ENCODE measurements at regions of chr6 and their contacts with region 1.

Region 1: DNA sequence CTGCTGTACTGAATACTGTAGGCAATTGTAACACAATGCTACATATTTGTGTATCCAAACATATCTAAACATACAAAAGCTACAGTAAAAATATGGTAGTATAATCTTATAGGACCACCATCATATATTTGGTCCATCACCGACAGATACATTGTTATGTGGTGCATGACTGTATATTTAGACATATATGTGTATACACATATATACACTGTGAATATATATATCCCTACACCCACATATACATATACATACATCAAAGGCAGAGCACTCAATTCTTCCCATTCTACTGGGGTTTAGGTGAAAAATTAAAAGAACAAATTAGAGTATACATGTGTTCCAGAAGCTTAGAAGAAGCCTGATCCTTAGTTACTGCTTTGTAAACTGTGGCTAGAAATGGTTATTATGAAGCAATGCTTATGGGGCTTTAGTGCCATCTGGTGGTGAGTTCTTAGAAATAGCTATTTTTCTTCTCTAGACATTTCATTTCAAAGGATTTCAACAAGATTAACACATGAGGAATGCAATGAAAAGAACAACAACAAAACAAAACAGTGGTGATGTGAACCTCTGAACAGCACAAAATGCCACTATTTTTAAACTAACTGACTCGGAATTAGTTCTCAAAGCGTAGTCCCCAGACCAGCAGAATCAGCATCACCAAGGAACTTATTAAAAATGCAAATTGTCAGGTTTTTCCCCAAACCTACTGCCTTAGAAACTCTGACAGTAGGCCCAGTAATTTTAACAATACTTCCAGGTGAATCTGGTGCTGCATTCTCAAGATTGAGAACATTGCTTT is 38.0 kb downstream of the PKHD1 start:
- DNase-seq: peak in 2 of 35 experiments; percentile 3 to 48
- ATAC-seq: peak in 1 of 4 experiments; percentile 32
- H3K4me3 ChIP-seq: no peak overlapping the region
- H3K4me3 Mint-ChIP-seq: no peak overlapping the region
- H3K27ac ChIP-seq: no peak overlapping the region
- H3K27ac Mint-ChIP-seq: no peak overlapping the region
- H3K4me1 ChIP-seq: no peaks in the 10 kb centered on the region
- H3K4me1 Mint-ChIP-seq: no peaks in the 10 kb centered on the region
- H3K27me3 ChIP-seq: peaks cover 0 to 13% of the 10 kb centered on the region in 2 experiments
- H3K27me3 Mint-ChIP-seq: peaks cover 10 to 45% of the 10 kb centered on the region in 2 donors

Region 2: GRCh38 chr6:52000064-52000463 is 49.4 kb before region 1 on chr6:
- CTCF ChIA-PET with region 1: no interaction called
- POLR2A ChIA-PET with region 1: no interaction called
- DNase-seq: no peak
- ATAC-seq: no peak
- H3K4me3 ChIP-seq: no peak overlapping the region
- H3K4me3 Mint-ChIP-seq: no peak overlapping the region
- H3K27ac ChIP-seq: no peak overlapping the region
- H3K27ac Mint-ChIP-seq: no peak overlapping the region
- H3K4me1 ChIP-seq: no peaks in the 10 kb centered on the region
- H3K4me1 Mint-ChIP-seq: no peaks in the 10 kb centered on the region
- H3K27me3 ChIP-seq: no peaks in the 10 kb centered on the region
- H3K27me3 Mint-ChIP-seq: peaks cover 10 to 17% of the 10 kb centered on the region in 2 donors

Region 3: DNA sequence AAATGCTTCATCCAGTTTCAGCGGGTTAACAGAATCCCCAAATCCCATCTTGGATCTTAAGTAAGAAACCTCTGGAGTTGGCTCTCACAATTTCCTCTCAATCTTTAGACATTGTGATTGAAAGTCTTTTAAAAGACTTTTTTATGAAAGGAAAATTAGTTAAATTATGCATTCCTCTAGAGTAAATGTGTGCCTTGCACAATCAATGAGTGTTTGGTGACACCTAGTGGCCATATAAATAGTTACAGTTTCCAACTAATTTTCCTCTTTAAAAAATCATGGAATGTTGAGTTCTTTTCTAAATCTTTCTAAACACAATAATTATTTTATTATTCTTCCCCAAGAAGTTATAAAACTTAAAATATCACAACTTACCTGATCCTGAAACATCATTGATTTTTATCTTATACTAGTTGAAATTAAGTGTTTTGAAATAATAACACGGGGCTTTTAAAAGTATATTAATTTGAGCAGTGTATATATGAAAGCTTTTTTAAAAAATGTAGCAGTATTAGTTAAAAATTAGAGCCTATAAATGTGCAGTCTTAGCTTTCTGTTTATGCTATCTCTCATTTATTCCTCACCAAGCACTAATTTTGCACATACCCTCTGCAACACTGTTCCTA is 28.4 kb before region 1 on chr6:
- CTCF ChIA-PET with region 1: interaction called, 3 to 10 read pairs
- POLR2A ChIA-PET with region 1: no interaction called
- DNase-seq: peak in 1 of 35 experiments; percentile 40
- ATAC-seq: no peak
- H3K4me3 ChIP-seq: no peak overlapping the region
- H3K4me3 Mint-ChIP-seq: no peak overlapping the region
- H3K27ac ChIP-seq: no peak overlapping the region
- H3K27ac Mint-ChIP-seq: no peak overlapping the region
- H3K4me1 ChIP-seq: no peaks in the 10 kb centered on the region
- H3K4me1 Mint-ChIP-seq: no peaks in the 10 kb centered on the region
- H3K27me3 ChIP-seq: peaks cover 0 to 16% of the 10 kb centered on the region in 2 experiments
- H3K27me3 Mint-ChIP-seq: peaks cover 17 to 20% of the 10 kb centered on the region in 2 donors

Region 4: DNA sequence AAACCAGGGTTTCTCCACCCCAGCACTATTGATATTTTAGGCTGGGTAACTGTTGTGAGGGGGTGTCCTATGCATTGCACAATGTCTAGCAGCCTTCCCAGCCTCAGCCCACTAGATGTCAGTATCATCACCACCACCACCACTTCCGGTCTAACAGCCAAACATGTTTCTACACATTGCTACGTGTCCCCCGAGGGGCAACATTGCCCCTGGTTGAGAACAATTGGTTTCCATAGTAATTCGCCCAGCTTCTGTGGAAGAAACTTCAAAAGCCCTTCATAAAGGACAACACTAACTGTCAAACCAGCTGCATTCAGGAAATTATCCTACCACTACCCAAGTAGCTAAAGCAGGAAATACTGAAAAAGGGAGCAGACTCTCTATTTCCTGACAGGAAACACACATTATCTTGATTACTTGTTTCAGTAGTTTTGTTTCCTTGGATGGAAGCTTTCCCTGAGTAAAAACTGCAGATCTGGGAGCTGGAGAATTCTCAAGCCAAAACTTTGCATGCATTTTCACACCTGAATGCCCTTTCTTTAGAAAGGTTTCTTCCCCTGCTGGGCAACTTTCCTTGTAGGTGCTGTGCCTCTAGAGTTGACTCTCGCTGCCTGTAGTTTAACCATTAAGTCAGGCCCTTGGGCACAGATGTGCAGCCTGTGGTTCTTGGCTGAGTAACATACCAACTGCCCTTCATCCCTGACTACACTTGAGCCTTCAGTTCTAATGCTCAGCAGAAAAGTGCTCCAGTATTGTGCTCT is 14.3 kb after region 1 on chr6:
- CTCF ChIA-PET with region 1: interaction called, 3 to 10 read pairs
- POLR2A ChIA-PET with region 1: no interaction called
- DNase-seq: peak; percentile 25 to 75 (median 41)
- ATAC-seq: peak; percentile 88 to 95 (median 93)
- H3K4me3 ChIP-seq: peak overlapping the region; percentile 10 to 14
- H3K4me3 Mint-ChIP-seq: peak overlapping the region; percentile 36 to 74 (median 59)
- H3K27ac ChIP-seq: peak overlapping the region; percentile 40
- H3K27ac Mint-ChIP-seq: peak overlapping the region; percentile 90 to 91
- H3K4me1 ChIP-seq: peaks cover 5 to 10% of the 10 kb centered on the region in 2 experiments
- H3K4me1 Mint-ChIP-seq: peaks cover 12 to 14% (median 13%) of the 10 kb centered on the region in 3 donors
- H3K27me3 ChIP-seq: peaks cover 0 to 3% of the 10 kb centered on the region in 2 experiments
- H3K27me3 Mint-ChIP-seq: peaks cover under 1 to 2% of the 10 kb centered on the region in 2 donors

Measured in T-cell (primary cell).